ENCODE measurements at regions of chr14 and their contacts with region 1.

Region 1: GRCh38 chr14:94080471-94081289 is at the start of gene DDX24:
- DNase-seq: peak; percentile 96 to 97 (median 97)
- H3K4me3 ChIP-seq: peak within 1 kb of the TSS; percentile 92 to 98
- H3K4me3 Mint-ChIP-seq: peak within 1 kb of the TSS; percentile 99 to 100 (median 99)
- H3K27ac ChIP-seq: peak within 1 kb of the TSS; percentile 86
- H3K27ac Mint-ChIP-seq: peak within 1 kb of the TSS; percentile 98 to 100 (median 99)
- H3K4me1 ChIP-seq: peaks cover 51% of the 10 kb centered on the region
- H3K4me1 Mint-ChIP-seq: peaks cover 36 to 72% (median 46%) of the 10 kb centered on the region in 4 donors
- H3K27me3 ChIP-seq: no peaks in the 10 kb centered on the region
- H3K27me3 Mint-ChIP-seq: no peaks in the 10 kb centered on the region
- total RNA-seq, gene DDX24: 313 to 322 TPM

Region 2: GRCh38 chr14:93975791-93976476 is 104.7 kb before region 1 on chr14:
- CTCF ChIA-PET with region 1: no interaction called
- POLR2A ChIA-PET with region 1: interaction called, 10 read pairs
- intact Hi-C with region 1: loop called (anchors 2 kb)
- DNase-seq: peak in 2 of 5 donors; percentile 17 to 40
- H3K4me3 ChIP-seq: peak overlapping the region; percentile 30 to 53
- H3K4me3 Mint-ChIP-seq: peak overlapping the region; percentile 58 to 84 (median 76)
- H3K27ac ChIP-seq: peak overlapping the region; percentile 10
- H3K27ac Mint-ChIP-seq: peak overlapping the region in 6 of 7 donors; percentile 5 to 96 (median 56)
- H3K4me1 ChIP-seq: peaks cover 79% of the 10 kb centered on the region
- H3K4me1 Mint-ChIP-seq: peaks cover 52 to 80% (median 66%) of the 10 kb centered on the region in 4 donors
- H3K27me3 ChIP-seq: no peaks in the 10 kb centered on the region
- H3K27me3 Mint-ChIP-seq: no peaks in the 10 kb centered on the region

Region 3: DNA sequence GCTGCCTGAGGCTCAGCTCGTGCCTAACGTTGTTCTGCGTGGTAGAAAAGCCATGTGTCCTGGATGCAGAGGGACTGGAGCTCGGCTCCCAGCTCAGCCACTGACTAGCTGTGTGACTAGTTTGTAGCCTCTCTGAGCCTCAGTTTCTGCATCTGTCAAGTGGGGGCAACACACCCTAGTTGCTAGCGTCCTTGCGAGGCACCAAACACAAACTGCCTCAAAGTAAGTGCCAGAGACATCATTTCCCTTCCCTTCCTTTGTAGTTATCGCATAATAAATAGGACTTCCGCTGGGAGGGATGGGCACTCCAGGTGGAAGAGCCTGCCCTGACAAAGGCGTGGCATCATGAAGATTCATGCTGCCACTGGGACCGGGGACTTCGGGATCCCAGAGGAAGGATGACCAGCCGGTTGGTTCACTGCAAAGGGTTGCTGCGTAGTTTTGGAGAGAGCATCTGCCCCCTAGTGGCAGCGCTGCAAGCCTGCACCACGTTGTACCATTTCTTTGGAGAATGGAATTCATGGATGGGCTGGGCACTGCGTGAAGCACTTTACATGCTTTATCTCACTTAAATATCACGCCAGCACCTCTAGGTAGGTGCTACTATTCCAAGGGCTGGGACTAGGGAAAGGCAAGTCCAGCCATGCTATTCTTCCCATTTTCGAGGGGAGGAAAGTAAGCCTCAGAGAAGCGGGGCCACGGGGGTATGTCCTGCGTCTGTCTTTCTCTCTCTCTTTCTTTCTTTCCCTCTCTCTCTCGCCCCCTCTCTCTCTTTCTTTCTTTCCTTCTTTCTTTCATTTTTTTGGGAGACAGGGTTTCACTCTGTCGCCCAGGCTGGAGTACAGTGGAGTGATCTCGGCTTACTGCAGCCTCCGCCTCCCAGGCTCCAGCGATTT is 78.9 kb before region 1 on chr14:
- CTCF ChIA-PET with region 1: no interaction called
- POLR2A ChIA-PET with region 1: no interaction called
- intact Hi-C with region 1: no loop called
- DNase-seq: peak in 4 of 5 donors; percentile 52 to 61 (median 54)
- H3K4me3 ChIP-seq: no peak overlapping the region
- H3K4me3 Mint-ChIP-seq: peak overlapping the region in 5 of 8 donors; percentile 19 to 66 (median 36)
- H3K27ac ChIP-seq: no peak overlapping the region
- H3K27ac Mint-ChIP-seq: peak overlapping the region in 4 of 7 donors; percentile 8 to 61 (median 44)
- H3K4me1 ChIP-seq: peaks cover 8% of the 10 kb centered on the region
- H3K4me1 Mint-ChIP-seq: peaks cover 8 to 18% (median 10%) of the 10 kb centered on the region in 4 donors
- H3K27me3 ChIP-seq: no peaks in the 10 kb centered on the region
- H3K27me3 Mint-ChIP-seq: peaks cover 0 to 2% of the 10 kb centered on the region in 2 donors

Region 4: GRCh38 chr14:94066089-94066676 is 14.5 kb before region 1 on chr14:
- CTCF ChIA-PET with region 1: no interaction called
- POLR2A ChIA-PET with region 1: interaction called, 11 read pairs
- intact Hi-C with region 1: no loop called
- DNase-seq: no peak
- H3K4me3 ChIP-seq: no peak overlapping the region
- H3K4me3 Mint-ChIP-seq: peak overlapping the region in 5 of 8 donors; percentile 23 to 85 (median 41)
- H3K27ac ChIP-seq: no peak overlapping the region
- H3K27ac Mint-ChIP-seq: peak overlapping the region in 6 of 7 donors; percentile 12 to 84 (median 56)
- H3K4me1 ChIP-seq: peaks cover 53% of the 10 kb centered on the region
- H3K4me1 Mint-ChIP-seq: peaks cover 75 to 96% (median 85%) of the 10 kb centered on the region in 4 donors
- H3K27me3 ChIP-seq: no peaks in the 10 kb centered on the region
- H3K27me3 Mint-ChIP-seq: no peaks in the 10 kb centered on the region

Region 5: DNA sequence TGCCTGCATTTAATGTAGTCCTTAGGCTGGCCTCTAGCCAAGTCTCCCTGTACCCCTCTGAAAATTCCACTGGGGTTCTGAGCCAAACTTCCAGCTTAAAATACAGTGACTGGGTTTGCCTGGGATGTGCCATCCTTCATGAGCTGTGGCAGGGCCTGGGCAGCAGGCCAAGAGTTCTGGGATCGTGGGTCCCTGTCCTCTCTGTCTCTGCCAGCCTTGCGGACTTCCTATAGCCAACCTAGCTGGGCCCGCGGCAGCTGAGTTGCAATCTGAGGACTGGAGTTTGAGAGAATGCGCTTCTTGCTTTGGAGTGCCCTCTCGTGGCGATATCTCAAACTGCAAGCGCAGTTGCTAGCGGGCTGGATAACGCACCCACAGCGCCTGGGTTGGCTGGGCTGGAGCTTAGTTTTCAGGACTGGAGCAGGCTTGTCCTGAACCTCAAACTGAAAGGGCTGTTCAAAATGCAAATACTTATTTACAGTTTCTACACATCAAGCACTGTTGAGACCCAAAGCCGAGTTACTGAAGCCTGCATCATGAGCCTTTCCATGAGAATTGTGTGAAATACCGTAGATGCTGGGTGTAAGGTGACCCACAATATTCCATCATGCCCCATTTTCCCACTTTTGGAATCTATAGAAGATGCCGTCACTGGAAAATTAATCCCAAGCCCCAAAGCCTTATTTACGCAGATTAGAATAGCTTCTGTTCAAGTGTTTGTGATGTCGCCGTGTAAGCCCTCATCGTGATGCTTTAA is 56.1 kb after region 1 on chr14:
- CTCF ChIA-PET with region 1: interaction called, 12 read pairs
- POLR2A ChIA-PET with region 1: interaction called, 4 read pairs
- intact Hi-C with region 1: no loop called
- DNase-seq: peak; percentile 74 to 80 (median 77)
- H3K4me3 ChIP-seq: no peak overlapping the region
- H3K4me3 Mint-ChIP-seq: no peak overlapping the region
- H3K27ac ChIP-seq: no peak overlapping the region
- H3K27ac Mint-ChIP-seq: no peak overlapping the region
- H3K4me1 ChIP-seq: no peaks in the 10 kb centered on the region
- H3K4me1 Mint-ChIP-seq: peaks cover 0 to 10% (median 1%) of the 10 kb centered on the region in 4 donors
- H3K27me3 ChIP-seq: no peaks in the 10 kb centered on the region
- H3K27me3 Mint-ChIP-seq: peaks cover 1 to 3% of the 10 kb centered on the region in 2 donors

Region 6: GRCh38 chr14:94180655-94181271 is 100.1 kb after region 1 on chr14:
- CTCF ChIA-PET with region 1: interaction called, 5 read pairs
- POLR2A ChIA-PET with region 1: interaction called, 8 read pairs
- intact Hi-C with region 1: loop called (anchors 2 kb)
- DNase-seq: peak; percentile 68 to 81 (median 73)
- H3K4me3 ChIP-seq: peak overlapping the region in 1 of 2 donors; percentile 46
- H3K4me3 Mint-ChIP-seq: peak overlapping the region; percentile 2 to 79 (median 58)
- H3K27ac ChIP-seq: peak overlapping the region; percentile 29
- H3K27ac Mint-ChIP-seq: peak overlapping the region; percentile 18 to 91 (median 66)
- H3K4me1 ChIP-seq: peaks cover 10% of the 10 kb centered on the region
- H3K4me1 Mint-ChIP-seq: peaks cover 10 to 23% (median 16%) of the 10 kb centered on the region in 4 donors
- H3K27me3 ChIP-seq: peaks cover 2% of the 10 kb centered on the region
- H3K27me3 Mint-ChIP-seq: peaks cover 2 to 6% of the 10 kb centered on the region in 2 donors

Region 7: DNA sequence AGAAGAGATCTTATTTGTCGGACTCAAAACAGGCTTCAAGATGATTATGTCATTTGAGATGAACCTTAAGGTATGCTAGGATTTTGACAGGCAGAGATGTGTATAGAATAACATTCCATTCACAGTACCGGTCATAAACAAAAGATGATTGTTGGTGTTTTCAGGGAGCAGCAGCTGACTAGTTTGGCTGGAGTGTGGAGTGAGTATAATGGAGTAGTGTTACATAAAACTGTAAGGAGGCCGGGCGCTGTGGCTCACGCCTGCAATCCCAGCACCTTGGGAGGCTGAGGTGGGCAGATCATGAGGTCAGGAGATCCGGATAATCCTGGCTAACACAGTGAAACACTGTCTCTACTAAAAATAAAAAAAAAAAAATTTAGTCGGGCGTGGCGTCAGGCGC is 188.5 kb after region 1 on chr14:
- CTCF ChIA-PET with region 1: no interaction called
- POLR2A ChIA-PET with region 1: no interaction called
- intact Hi-C with region 1: no loop called
- DNase-seq: no peak
- H3K4me3 ChIP-seq: no peak overlapping the region
- H3K4me3 Mint-ChIP-seq: no peak overlapping the region
- H3K27ac ChIP-seq: no peak overlapping the region
- H3K27ac Mint-ChIP-seq: no peak overlapping the region
- H3K4me1 ChIP-seq: no peaks in the 10 kb centered on the region
- H3K4me1 Mint-ChIP-seq: no peaks in the 10 kb centered on the region
- H3K27me3 ChIP-seq: no peaks in the 10 kb centered on the region
- H3K27me3 Mint-ChIP-seq: peaks cover 2 to 8% of the 10 kb centered on the region in 2 donors

Region 8: GRCh38 chr14:94345337-94346064 is 264.8 kb after region 1 on chr14:
- CTCF ChIA-PET with region 1: no interaction called
- POLR2A ChIA-PET with region 1: no interaction called
- intact Hi-C with region 1: no loop called
- DNase-seq: peak in 2 of 5 donors; percentile 3 to 27
- H3K4me3 ChIP-seq: no peak overlapping the region
- H3K4me3 Mint-ChIP-seq: peak overlapping the region in 1 of 8 donors; percentile 22
- H3K27ac ChIP-seq: peak overlapping the region; percentile 52
- H3K27ac Mint-ChIP-seq: peak overlapping the region in 5 of 7 donors; percentile 74 to 86 (median 84)
- H3K4me1 ChIP-seq: peaks cover 18% of the 10 kb centered on the region
- H3K4me1 Mint-ChIP-seq: peaks cover 16 to 47% (median 20%) of the 10 kb centered on the region in 4 donors
- H3K27me3 ChIP-seq: no peaks in the 10 kb centered on the region
- H3K27me3 Mint-ChIP-seq: peaks cover 4 to 6% of the 10 kb centered on the region in 2 donors

Measured in CD4-positive, alpha-beta memory T cell (primary cell).